Body of pancreas (tissue), 4 donors: ENCODE measurements at regions of chr17 and their contacts with region 1.

Region 1: DNA sequence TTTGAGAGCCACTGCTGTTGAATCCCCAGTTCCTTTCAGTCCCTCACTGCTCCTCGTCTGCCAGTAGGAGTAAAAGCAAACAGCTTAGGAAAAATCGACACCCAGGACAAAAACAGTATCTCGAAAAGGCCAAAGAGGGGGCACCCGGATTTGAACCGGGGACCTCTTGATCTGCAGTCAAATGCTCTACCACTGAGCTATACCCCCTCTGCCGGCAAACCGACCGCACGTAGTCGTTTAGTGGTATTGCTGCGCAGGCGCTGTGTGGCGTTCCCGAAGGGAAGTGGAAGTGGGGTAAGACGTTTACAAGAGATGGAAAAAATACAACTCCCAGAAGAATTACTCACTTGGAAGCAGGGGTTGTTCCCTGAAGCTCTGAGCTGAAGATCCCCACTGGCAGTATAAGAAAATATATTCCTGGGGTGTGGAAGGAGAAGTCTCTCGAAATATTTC is 2.2 kb upstream of the PLXDC1 start:
- DNase-seq: peak; percentile 87 to 90 (median 88)
- ATAC-seq: peak; percentile 77
- H3K4me3 ChIP-seq: peak overlapping the region; percentile 13 to 76
- H3K27ac ChIP-seq: peak overlapping the region; percentile 53 to 85 (median 77)
- H3K4me1 ChIP-seq: peaks cover 27% of the 10 kb centered on the region
- H3K27me3 ChIP-seq: no peaks in the 10 kb centered on the region
- CTCF ChIP-seq: peak in 2 of 7 experiments; percentile 19 to 35
- POLR2A ChIP-seq: peak in 1 of 3 donors; percentile 9

Region 2: DNA sequence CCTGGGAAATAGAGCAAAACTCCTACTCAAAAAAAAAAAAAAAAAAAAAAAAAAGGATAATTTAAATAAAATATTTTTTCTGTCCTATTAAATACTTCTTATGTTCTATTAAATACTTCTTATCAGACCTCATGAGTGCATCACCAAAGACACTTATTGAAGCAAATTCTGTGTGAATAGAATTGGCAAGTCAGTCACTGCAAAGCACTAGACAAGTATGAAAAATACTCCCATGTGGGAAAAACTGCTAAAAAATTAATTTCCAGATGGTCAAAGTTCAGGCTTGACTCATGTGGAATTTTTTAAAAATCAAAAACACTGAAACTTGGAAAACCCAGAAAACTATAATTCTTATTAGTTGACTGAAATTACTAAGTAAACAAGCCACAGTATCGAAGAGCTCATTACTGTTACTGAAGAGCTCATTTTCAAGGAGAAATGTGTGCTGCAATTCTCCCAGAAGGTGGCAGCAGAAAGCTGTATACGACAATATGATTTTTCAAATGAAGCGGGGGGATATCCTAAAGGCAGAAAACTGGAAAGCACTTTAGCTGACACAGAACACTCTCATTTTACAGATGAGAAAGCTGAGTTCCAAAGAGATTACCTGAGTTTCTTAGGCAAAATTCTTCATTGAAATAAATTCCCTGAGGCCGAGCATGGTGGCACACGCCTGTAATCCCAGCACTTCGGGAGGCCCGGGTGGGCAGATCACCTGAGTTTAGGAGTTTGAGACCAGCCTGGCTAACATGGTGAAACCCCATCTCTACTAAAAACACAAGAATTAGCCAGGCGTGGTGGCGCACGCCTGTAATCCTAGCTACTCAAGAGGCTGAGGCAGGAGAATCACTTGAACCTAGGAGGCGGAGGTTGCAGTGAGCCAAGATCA is 170.5 kb before region 1 on chr17:
- intact Hi-C with region 1: loop called (anchors 10 kb)
- DNase-seq: peak; percentile 41 to 67 (median 56)
- ATAC-seq: peak; percentile 62
- H3K4me3 ChIP-seq: no peak overlapping the region
- H3K27ac ChIP-seq: no peak overlapping the region
- H3K4me1 ChIP-seq: no peaks in the 10 kb centered on the region
- H3K27me3 ChIP-seq: no peaks in the 10 kb centered on the region
- CTCF ChIP-seq: peak; percentile 51 to 82 (median 78)
- POLR2A ChIP-seq: no peak